Caco-2 (cell line): ENCODE measurements at regions of chr2 and their contacts with region 1.

Region 1: GRCh38 chr2:149597668-149598326 is 10.2 kb upstream of the MMADHC start:
- DNase-seq: peak; percentile 55 to 68
- H3K4me3 ChIP-seq: no peak overlapping the region
- H3K4me3 Mint-ChIP-seq: no peak overlapping the region
- H3K27ac Mint-ChIP-seq: no peak overlapping the region
- H3K4me1 ChIP-seq: peaks cover 24% of the 10 kb centered on the region
- H3K4me1 Mint-ChIP-seq: peaks cover 26% of the 10 kb centered on the region
- H3K27me3 ChIP-seq: no peaks in the 10 kb centered on the region
- H3K27me3 Mint-ChIP-seq: no peaks in the 10 kb centered on the region
- CTCF ChIP-seq: peak; percentile 77 to 83

Region 2: DNA sequence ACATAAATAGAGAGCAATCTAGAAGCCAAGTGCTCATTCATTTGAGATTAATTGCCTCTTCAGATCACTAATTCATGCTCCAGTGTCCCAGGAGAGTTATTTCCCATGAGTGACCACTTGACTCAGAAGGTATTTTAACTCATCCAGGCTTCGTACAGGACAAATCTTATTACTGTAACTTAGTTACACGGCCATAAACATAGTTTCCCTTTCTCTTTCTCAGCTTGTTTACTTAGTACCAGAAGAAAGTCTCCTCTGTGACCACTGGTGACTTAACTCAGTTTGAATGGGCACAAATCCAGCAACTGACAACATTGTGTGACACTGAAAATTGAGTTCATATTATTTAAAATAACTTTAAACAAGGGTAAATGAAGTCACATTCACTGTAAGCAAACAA is 35.5 kb before region 1 on chr2:
- CTCF ChIA-PET with region 1: no interaction called
- POLR2A ChIA-PET with region 1: no interaction called
- intact Hi-C with region 1: no loop called
- DNase-seq: no peak
- H3K4me3 ChIP-seq: no peak overlapping the region
- H3K4me3 Mint-ChIP-seq: no peak overlapping the region
- H3K27ac Mint-ChIP-seq: no peak overlapping the region
- H3K4me1 ChIP-seq: peaks cover 7% of the 10 kb centered on the region; the same call in 1 of the 2 replicates
- H3K4me1 Mint-ChIP-seq: no peaks in the 10 kb centered on the region
- H3K27me3 ChIP-seq: no peaks in the 10 kb centered on the region
- H3K27me3 Mint-ChIP-seq: no peaks in the 10 kb centered on the region
- CTCF ChIP-seq: no peak

Region 3: GRCh38 chr2:149573760-149574159 is 24.0 kb before region 1 on chr2:
- CTCF ChIA-PET with region 1: no interaction called
- POLR2A ChIA-PET with region 1: no interaction called
- intact Hi-C with region 1: no loop called
- DNase-seq: no peak
- H3K4me3 ChIP-seq: no peak overlapping the region
- H3K4me3 Mint-ChIP-seq: no peak overlapping the region
- H3K27ac Mint-ChIP-seq: no peak overlapping the region
- H3K4me1 ChIP-seq: peaks cover 15% of the 10 kb centered on the region; the same call in 1 of the 2 replicates
- H3K4me1 Mint-ChIP-seq: peaks cover 14% of the 10 kb centered on the region
- H3K27me3 ChIP-seq: no peaks in the 10 kb centered on the region
- H3K27me3 Mint-ChIP-seq: no peaks in the 10 kb centered on the region
- CTCF ChIP-seq: peak; percentile 25 to 49

Region 4: GRCh38 chr2:149715005-149715592 is 117.3 kb after region 1 on chr2:
- CTCF ChIA-PET with region 1: no interaction called
- POLR2A ChIA-PET with region 1: no interaction called
- intact Hi-C with region 1: loop called (anchors 1 kb)
- DNase-seq: peak; percentile 40 to 47
- H3K4me3 ChIP-seq: no peak overlapping the region
- H3K4me3 Mint-ChIP-seq: no peak overlapping the region
- H3K27ac Mint-ChIP-seq: no peak overlapping the region
- H3K4me1 ChIP-seq: no peaks in the 10 kb centered on the region
- H3K4me1 Mint-ChIP-seq: no peaks in the 10 kb centered on the region
- H3K27me3 ChIP-seq: no peaks in the 10 kb centered on the region
- H3K27me3 Mint-ChIP-seq: no peaks in the 10 kb centered on the region
- CTCF ChIP-seq: peak; percentile 75 to 81

Region 5: DNA sequence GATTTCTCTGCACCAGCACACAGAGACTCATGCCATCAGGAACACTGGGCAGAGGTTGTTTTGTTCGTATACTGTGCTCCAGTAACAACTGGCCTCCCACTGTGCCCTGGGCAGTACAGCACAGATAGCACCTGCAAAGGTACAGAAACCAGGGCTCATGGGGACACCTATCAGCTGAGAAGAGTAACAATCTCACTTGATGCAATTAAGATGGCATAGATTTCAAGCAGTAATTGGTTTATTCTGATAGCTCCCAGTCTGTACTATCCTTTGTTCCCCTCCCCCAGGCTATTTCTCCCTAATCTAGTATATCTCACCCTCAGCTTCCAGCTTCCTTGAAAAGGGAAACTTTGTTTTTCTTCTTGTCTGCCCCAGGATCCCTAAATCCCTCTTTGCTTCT is 333.7 kb after region 1 on chr2:
- CTCF ChIA-PET with region 1: no interaction called
- POLR2A ChIA-PET with region 1: no interaction called
- intact Hi-C with region 1: loop called (anchors 10 kb)
- DNase-seq: no peak
- H3K4me3 ChIP-seq: no peak overlapping the region
- H3K4me3 Mint-ChIP-seq: no peak overlapping the region
- H3K27ac Mint-ChIP-seq: no peak overlapping the region
- H3K4me1 ChIP-seq: no peaks in the 10 kb centered on the region
- H3K4me1 Mint-ChIP-seq: no peaks in the 10 kb centered on the region
- H3K27me3 ChIP-seq: no peaks in the 10 kb centered on the region
- H3K27me3 Mint-ChIP-seq: no peaks in the 10 kb centered on the region
- CTCF ChIP-seq: no peak

Region 6: GRCh38 chr2:150977296-150977695 is 1379.5 kb after region 1 on chr2:
- CTCF ChIA-PET with region 1: no interaction called
- POLR2A ChIA-PET with region 1: interaction called, 10 read pairs
- intact Hi-C with region 1: no loop called
- DNase-seq: peak in 1 of 2 experiments; percentile 5
- H3K4me3 ChIP-seq: no peak overlapping the region
- H3K4me3 Mint-ChIP-seq: no peak overlapping the region
- H3K27ac Mint-ChIP-seq: no peak overlapping the region
- H3K4me1 ChIP-seq: peaks cover 19% of the 10 kb centered on the region; the same call in 1 of the 2 replicates
- H3K4me1 Mint-ChIP-seq: peaks cover 5% of the 10 kb centered on the region
- H3K27me3 ChIP-seq: no peaks in the 10 kb centered on the region
- H3K27me3 Mint-ChIP-seq: no peaks in the 10 kb centered on the region
- CTCF ChIP-seq: no peak

Region 7: GRCh38 chr2:151238527-151239487 is 1641.0 kb after region 1 on chr2:
- CTCF ChIA-PET with region 1: no interaction called
- POLR2A ChIA-PET with region 1: no interaction called
- intact Hi-C with region 1: loop called (anchors 5 kb)
- DNase-seq: peak; percentile 51 to 69
- H3K4me3 ChIP-seq: no peak overlapping the region
- H3K4me3 Mint-ChIP-seq: no peak overlapping the region
- H3K27ac Mint-ChIP-seq: no peak overlapping the region
- H3K4me1 ChIP-seq: no peaks in the 10 kb centered on the region
- H3K4me1 Mint-ChIP-seq: no peaks in the 10 kb centered on the region
- H3K27me3 ChIP-seq: no peaks in the 10 kb centered on the region; the same call in 1 of the 2 replicates
- H3K27me3 Mint-ChIP-seq: peaks cover 5% of the 10 kb centered on the region
- CTCF ChIP-seq: peak; percentile 74 to 87